HCT116 (cell line): ENCODE measurements at regions of chr10 and their contacts with region 1.

Region 1: DNA sequence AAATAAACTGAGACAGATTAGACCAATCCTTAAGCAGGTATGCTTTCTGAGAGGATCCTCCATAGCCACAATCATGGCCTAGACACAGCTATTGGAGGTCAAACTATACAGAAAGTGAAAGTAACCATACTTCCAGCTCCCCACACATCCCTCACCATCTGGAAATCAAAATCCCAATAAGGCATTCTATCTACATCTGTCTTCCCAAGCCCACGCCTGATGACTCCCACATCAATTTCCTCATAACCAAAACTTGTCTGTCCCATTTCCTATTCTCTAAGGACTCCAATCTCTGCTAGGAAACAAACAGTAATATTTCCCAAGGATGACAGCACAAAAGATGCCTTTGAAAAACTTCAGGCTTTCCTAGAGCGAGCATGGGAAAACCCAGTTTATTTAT is 247.3 kb upstream of the HPS1 start:
- DNase-seq: no peak
- ATAC-seq: no peak
- H3K4me3 ChIP-seq: no peak overlapping the region
- H3K27ac ChIP-seq: no peak overlapping the region
- H3K4me1 ChIP-seq: no peaks in the 10 kb centered on the region
- H3K27me3 ChIP-seq: no peaks in the 10 kb centered on the region
- CTCF ChIP-seq: no peak
- POLR2A ChIP-seq: no peak
- RAD21 ChIP-seq: no peak

Region 2: DNA sequence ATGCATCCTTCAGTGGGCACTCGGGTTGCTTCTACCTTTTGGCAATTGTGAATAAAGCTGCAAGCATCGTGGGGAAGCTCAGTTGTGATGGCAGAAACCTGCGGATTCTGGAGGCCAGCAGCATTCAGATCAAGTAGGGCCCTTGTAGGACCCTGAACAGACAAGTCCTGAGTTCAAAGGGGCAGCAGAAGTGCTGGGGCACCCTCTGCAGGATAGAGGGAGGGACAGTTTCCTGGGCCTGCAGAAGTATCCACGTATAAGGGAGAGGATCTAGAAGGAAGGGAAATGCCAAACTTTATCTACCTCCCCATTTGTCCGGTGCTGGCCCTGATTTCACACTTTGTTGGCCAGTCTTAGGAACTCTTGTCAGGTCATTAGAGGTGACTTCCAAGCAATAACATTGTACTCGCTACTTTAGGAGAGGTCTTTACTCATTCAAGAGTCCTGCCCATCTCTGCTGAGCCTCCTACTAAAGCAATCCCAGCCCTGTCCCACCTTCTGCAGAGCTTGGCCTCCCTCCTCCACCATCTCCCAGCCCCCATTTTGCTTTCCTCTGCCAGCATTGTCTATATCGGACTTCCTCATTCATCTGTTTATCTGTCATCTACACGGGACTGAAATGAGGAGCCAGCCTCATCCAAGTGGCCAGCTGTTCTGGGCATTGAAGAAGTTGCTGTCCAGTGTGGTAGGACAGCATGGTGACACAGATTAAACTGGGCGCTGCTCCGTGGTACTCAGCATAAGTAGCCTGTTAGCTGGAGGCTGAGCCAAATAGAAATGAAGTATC is 586.2 kb before region 1 on chr10:
- CTCF ChIA-PET with region 1: no interaction called
- POLR2A ChIA-PET with region 1: no interaction called
- RAD21 ChIA-PET with region 1: no interaction called
- intact Hi-C with region 1: no loop called
- DNase-seq: no peak
- ATAC-seq: no peak
- H3K4me3 ChIP-seq: no peak overlapping the region
- H3K27ac ChIP-seq: no peak overlapping the region
- H3K4me1 ChIP-seq: no peaks in the 10 kb centered on the region
- H3K27me3 ChIP-seq: peaks cover 86% of the 10 kb centered on the region
- CTCF ChIP-seq: no peak
- POLR2A ChIP-seq: no peak
- RAD21 ChIP-seq: peak; percentile 20; the same call in 1 of the 2 replicates

Region 3: DNA sequence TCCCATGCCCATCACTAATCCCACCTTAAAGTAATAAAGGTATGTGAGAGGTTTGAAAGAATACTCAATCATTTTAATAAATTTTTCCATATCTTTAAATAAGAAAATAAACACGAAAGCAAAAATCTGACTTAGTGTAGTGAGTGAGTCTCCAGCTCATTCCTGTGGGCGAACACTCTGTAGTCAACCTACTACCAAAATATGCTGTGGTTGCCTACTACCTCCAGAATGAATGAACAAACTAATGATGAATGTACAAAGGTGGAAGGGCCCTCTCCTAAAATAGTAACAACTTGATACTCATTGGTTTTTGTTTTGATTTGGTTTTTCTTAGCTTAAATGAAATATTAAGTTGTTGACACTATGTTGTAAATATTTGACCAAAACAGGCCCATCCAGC is 51.7 kb before region 1 on chr10:
- CTCF ChIA-PET with region 1: no interaction called
- POLR2A ChIA-PET with region 1: no interaction called
- RAD21 ChIA-PET with region 1: no interaction called
- intact Hi-C with region 1: loop called (anchors 5 kb)
- DNase-seq: no peak
- ATAC-seq: no peak
- H3K4me3 ChIP-seq: no peak overlapping the region
- H3K27ac ChIP-seq: no peak overlapping the region
- H3K4me1 ChIP-seq: no peaks in the 10 kb centered on the region
- H3K27me3 ChIP-seq: peaks cover 30% of the 10 kb centered on the region
- CTCF ChIP-seq: no peak
- POLR2A ChIP-seq: no peak
- RAD21 ChIP-seq: no peak

Region 4: GRCh38 chr10:98886686-98887085 is 192.7 kb after region 1 on chr10:
- CTCF ChIA-PET with region 1: no interaction called
- POLR2A ChIA-PET with region 1: no interaction called
- RAD21 ChIA-PET with region 1: no interaction called
- intact Hi-C with region 1: no loop called
- DNase-seq: no peak
- ATAC-seq: no peak
- H3K4me3 ChIP-seq: no peak overlapping the region
- H3K27ac ChIP-seq: no peak overlapping the region
- H3K4me1 ChIP-seq: no peaks in the 10 kb centered on the region
- H3K27me3 ChIP-seq: peaks cover 8% of the 10 kb centered on the region; the same call in 1 of the 2 replicates
- CTCF ChIP-seq: no peak
- POLR2A ChIP-seq: no peak
- RAD21 ChIP-seq: no peak